GM12878 (cell line): ENCODE measurements at regions of chr13 and their contacts with region 1.

Region 1: GRCh38 chr13:97221989-97222700 is at the start of gene MBNL2:
- DNase-seq: peak; percentile 77
- ATAC-seq: peak; percentile 92
- H3K4me3 ChIP-seq: peak within 1 kb of the TSS; percentile 70
- H3K27ac ChIP-seq: peak within 1 kb of the TSS; percentile 76
- H3K4me1 ChIP-seq: peaks cover 7% of the 10 kb centered on the region; the same call in 1 of the 2 replicates
- H3K27me3 ChIP-seq: no peaks in the 10 kb centered on the region
- CTCF ChIP-seq: no peak
- EP300 ChIP-seq: 0 out of 4 replicates have a peak, but pooled peaks of 1 of the 2 experiments have one; percentile 15
- POLR2A ChIP-seq: peak; percentile 56
- RAD21 ChIP-seq: no peak
- polyA plus RNA-seq, gene MBNL2: 1.6 to 2.1 TPM

Region 2: DNA sequence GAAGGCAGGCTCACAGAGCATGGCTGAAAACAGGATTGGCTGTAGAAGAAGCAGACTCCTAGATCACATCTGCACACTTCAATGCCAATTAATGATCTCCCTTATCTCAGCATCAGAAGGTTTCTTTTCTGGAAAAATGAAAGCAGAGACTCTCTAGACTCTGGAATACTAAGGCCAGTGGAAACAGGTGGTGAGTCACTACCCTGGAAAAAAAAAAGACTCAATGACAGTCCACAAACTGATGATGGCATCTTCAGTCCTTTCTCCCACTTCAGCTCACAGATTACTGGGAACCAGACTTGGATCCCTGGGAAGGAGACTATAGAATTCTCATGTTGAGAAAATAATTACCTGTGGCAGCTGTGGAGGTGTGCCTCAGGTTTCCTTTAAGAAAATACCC is 47.5 kb before region 1 on chr13:
- CTCF ChIA-PET with region 1: no interaction called
- POLR2A ChIA-PET with region 1: no interaction called
- RAD21 ChIA-PET with region 1: no interaction called
- SMC1A ChIA-PET with region 1: no interaction called
- in situ Hi-C with region 1: no loop called
- intact Hi-C with region 1: no loop called
- DNase-seq: no peak
- ATAC-seq: no peak
- H3K4me3 ChIP-seq: no peak overlapping the region
- H3K27ac ChIP-seq: no peak overlapping the region
- H3K4me1 ChIP-seq: no peaks in the 10 kb centered on the region
- H3K27me3 ChIP-seq: no peaks in the 10 kb centered on the region
- CTCF ChIP-seq: no peak
- EP300 ChIP-seq: no peak
- POLR2A ChIP-seq: no peak
- RAD21 ChIP-seq: no peak

Region 3: DNA sequence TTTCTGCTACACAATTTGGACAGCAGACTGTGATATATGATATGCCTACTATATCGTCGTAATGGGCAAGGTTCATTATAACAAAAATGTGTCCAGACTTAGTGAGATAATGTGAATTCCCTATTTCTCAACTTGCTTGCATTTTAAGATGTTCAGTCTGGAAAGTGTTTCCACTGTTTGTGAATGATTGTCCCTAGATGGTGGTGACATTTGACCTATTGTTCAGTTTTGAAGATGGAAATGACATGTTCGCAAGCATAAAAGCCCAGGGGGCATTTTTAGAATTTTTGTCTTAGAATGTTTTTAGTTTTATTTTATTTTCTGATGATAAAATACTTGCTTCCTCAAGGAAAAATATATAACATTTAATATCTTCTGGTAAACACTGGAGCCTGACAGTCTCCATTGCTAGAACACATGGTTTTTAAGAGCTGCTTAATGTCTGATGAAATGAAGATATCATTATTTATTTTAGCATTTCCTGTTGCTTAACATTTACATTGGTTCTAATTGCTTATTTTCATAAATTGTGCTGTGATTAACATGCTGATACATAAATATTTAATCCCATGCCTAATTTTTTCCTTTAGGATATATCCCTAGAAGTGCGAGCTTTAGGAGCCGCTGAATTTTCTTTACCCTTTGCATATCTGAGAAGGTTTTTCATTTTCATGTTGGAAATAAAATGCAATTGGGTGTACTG is 27.1 kb after region 1 on chr13:
- CTCF ChIA-PET with region 1: interaction called, 4 read pairs
- POLR2A ChIA-PET with region 1: interaction called, 3 read pairs
- RAD21 ChIA-PET with region 1: interaction called, 3 read pairs
- SMC1A ChIA-PET with region 1: interaction called, 23 read pairs
- in situ Hi-C with region 1: no loop called
- intact Hi-C with region 1: no loop called
- DNase-seq: no peak
- ATAC-seq: no peak
- H3K4me3 ChIP-seq: no peak overlapping the region
- H3K27ac ChIP-seq: no peak overlapping the region
- H3K4me1 ChIP-seq: no peaks in the 10 kb centered on the region
- H3K27me3 ChIP-seq: no peaks in the 10 kb centered on the region
- CTCF ChIP-seq: no peak
- EP300 ChIP-seq: no peak
- POLR2A ChIP-seq: no peak
- RAD21 ChIP-seq: no peak

Region 4: GRCh38 chr13:97257800-97258799 is 36.0 kb after region 1 on chr13:
- CTCF ChIA-PET with region 1: interaction called, 5 read pairs
- POLR2A ChIA-PET with region 1: interaction called, 13 read pairs
- RAD21 ChIA-PET with region 1: interaction called, 4 read pairs
- SMC1A ChIA-PET with region 1: interaction called, 8 read pairs
- in situ Hi-C with region 1: no loop called
- intact Hi-C with region 1: no loop called
- DNase-seq: peak; percentile 37
- ATAC-seq: peak; percentile 83
- H3K4me3 ChIP-seq: no peak overlapping the region
- H3K27ac ChIP-seq: no peak overlapping the region
- H3K4me1 ChIP-seq: peaks cover 24% of the 10 kb centered on the region
- H3K27me3 ChIP-seq: no peaks in the 10 kb centered on the region
- CTCF ChIP-seq: no peak
- EP300 ChIP-seq: no peak
- POLR2A ChIP-seq: no peak
- RAD21 ChIP-seq: no peak

Region 5: GRCh38 chr13:97344265-97345175 is 122.4 kb after region 1 on chr13:
- CTCF ChIA-PET with region 1: interaction called, 20 read pairs
- POLR2A ChIA-PET with region 1: interaction called, 7 read pairs
- RAD21 ChIA-PET with region 1: interaction called, 9 read pairs
- SMC1A ChIA-PET with region 1: interaction called, 13 read pairs
- in situ Hi-C with region 1: no loop called
- intact Hi-C with region 1: loop called (anchors 2 kb)
- DNase-seq: no peak
- ATAC-seq: peak; percentile 93
- H3K4me3 ChIP-seq: no peak overlapping the region
- H3K27ac ChIP-seq: no peak overlapping the region
- H3K4me1 ChIP-seq: no peaks in the 10 kb centered on the region
- H3K27me3 ChIP-seq: no peaks in the 10 kb centered on the region
- CTCF ChIP-seq: peak; percentile 59 to 68 (median 64); a peak in 5 of 6 replicates
- EP300 ChIP-seq: no peak
- POLR2A ChIP-seq: no peak
- RAD21 ChIP-seq: peak; percentile 85

Region 6: GRCh38 chr13:97353927-97354675 is 132.0 kb after region 1 on chr13:
- CTCF ChIA-PET with region 1: interaction called, 33 read pairs
- POLR2A ChIA-PET with region 1: interaction called, 4 read pairs
- RAD21 ChIA-PET with region 1: interaction called, 6 read pairs
- SMC1A ChIA-PET with region 1: interaction called, 29 read pairs
- in situ Hi-C with region 1: no loop called
- intact Hi-C with region 1: loop called (anchors 5 kb)
- DNase-seq: no peak
- ATAC-seq: no peak
- H3K4me3 ChIP-seq: no peak overlapping the region
- H3K27ac ChIP-seq: no peak overlapping the region
- H3K4me1 ChIP-seq: no peaks in the 10 kb centered on the region
- H3K27me3 ChIP-seq: no peaks in the 10 kb centered on the region
- CTCF ChIP-seq: no peak
- EP300 ChIP-seq: no peak
- POLR2A ChIP-seq: no peak
- RAD21 ChIP-seq: no peak

Region 7: DNA sequence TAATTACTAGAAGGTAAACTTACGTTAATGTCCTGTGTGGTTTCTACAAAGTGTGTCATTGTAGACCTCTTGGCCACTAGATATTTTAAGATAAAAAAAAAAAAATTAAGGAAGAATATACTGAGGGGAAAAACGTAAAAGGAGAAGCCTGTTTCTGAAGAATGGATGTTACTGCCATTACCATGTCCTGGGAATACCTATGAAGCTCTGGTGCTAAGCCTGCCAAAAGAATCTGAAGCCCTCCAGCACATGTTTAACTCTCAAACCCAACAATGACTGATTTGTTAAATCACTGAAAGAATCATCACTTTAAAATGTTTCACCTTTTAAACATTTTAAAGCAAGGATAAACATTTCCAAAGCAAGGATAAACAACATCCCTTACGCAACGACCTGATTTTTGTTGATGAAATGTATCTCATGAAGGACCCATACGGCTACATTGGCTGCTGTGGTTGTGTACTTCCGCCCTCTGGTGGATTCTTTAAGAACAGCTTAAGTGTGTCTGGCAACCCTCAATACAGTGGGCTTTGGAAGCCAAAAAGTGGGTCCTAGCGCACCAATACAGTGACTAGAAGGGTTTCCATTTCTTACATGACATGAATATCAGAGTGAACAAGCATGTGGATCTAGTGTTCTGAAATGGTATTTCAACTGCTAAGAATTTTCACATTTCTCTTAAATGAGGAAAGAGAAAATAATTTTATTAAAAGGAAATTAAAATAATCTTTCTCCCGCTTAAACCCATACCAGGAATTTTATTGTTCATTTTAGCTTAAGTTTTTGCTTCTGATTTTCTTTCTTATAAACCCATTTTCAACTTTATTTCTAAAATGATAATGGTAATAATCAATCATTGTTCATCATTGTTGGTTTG is 137.3 kb after region 1 on chr13:
- CTCF ChIA-PET with region 1: interaction called, 33 read pairs
- POLR2A ChIA-PET with region 1: no interaction called
- RAD21 ChIA-PET with region 1: interaction called, 6 read pairs
- SMC1A ChIA-PET with region 1: interaction called, 29 read pairs
- in situ Hi-C with region 1: no loop called
- intact Hi-C with region 1: loop called (anchors 5 kb)
- DNase-seq: no peak
- ATAC-seq: peak; percentile 100
- H3K4me3 ChIP-seq: no peak overlapping the region
- H3K27ac ChIP-seq: no peak overlapping the region
- H3K4me1 ChIP-seq: no peaks in the 10 kb centered on the region
- H3K27me3 ChIP-seq: no peaks in the 10 kb centered on the region
- CTCF ChIP-seq: peak; percentile 77 to 84 (median 83)
- EP300 ChIP-seq: no peak
- POLR2A ChIP-seq: no peak
- RAD21 ChIP-seq: peak; percentile 90

Region 8: GRCh38 chr13:97460004-97460775 is 238.0 kb after region 1 on chr13:
- CTCF ChIA-PET with region 1: no interaction called
- POLR2A ChIA-PET with region 1: interaction called, 5 read pairs
- RAD21 ChIA-PET with region 1: interaction called, 4 read pairs
- SMC1A ChIA-PET with region 1: interaction called, 10 read pairs
- in situ Hi-C with region 1: no loop called
- intact Hi-C with region 1: no loop called
- DNase-seq: peak; percentile 91
- ATAC-seq: peak; percentile 94
- H3K4me3 ChIP-seq: peak overlapping the region; percentile 53
- H3K27ac ChIP-seq: peak overlapping the region; percentile 92
- H3K4me1 ChIP-seq: peaks cover 39% of the 10 kb centered on the region
- H3K27me3 ChIP-seq: no peaks in the 10 kb centered on the region
- CTCF ChIP-seq: no peak
- EP300 ChIP-seq: peak; percentile 82 to 85
- POLR2A ChIP-seq: no peak
- RAD21 ChIP-seq: peak; percentile 9; the same call in 1 of the 2 replicates

Region 9: GRCh38 chr13:98509271-98510155 is 1287.4 kb after region 1 on chr13:
- CTCF ChIA-PET with region 1: no interaction called
- POLR2A ChIA-PET with region 1: no interaction called
- RAD21 ChIA-PET with region 1: no interaction called
- SMC1A ChIA-PET with region 1: no interaction called
- in situ Hi-C with region 1: no loop called
- intact Hi-C with region 1: no loop called
- DNase-seq: peak; percentile 79
- ATAC-seq: peak; percentile 67
- H3K4me3 ChIP-seq: no peak overlapping the region
- H3K27ac ChIP-seq: peak overlapping the region; percentile 72
- H3K4me1 ChIP-seq: peaks cover 80% of the 10 kb centered on the region
- H3K27me3 ChIP-seq: no peaks in the 10 kb centered on the region
- CTCF ChIP-seq: no peak
- EP300 ChIP-seq: peak; percentile 49 to 72; a peak in 2 of 4 replicates
- POLR2A ChIP-seq: no peak
- RAD21 ChIP-seq: no peak